Lower lobe of right lung (tissue), 2 donors: ENCODE measurements at regions of chr1 and their contacts with region 1.

Region 1: GRCh38 chr1:109404838-109405237 is 7.1 kb upstream of the SORT1 start:
- DNase-seq: no peak
- ATAC-seq: no peak
- H3K4me3 ChIP-seq: no peak overlapping the region
- H3K27ac ChIP-seq: no peak overlapping the region
- H3K4me1 ChIP-seq: no peaks in the 10 kb centered on the region
- H3K27me3 ChIP-seq: no peaks in the 10 kb centered on the region
- CTCF ChIP-seq: no peak

Region 2: DNA sequence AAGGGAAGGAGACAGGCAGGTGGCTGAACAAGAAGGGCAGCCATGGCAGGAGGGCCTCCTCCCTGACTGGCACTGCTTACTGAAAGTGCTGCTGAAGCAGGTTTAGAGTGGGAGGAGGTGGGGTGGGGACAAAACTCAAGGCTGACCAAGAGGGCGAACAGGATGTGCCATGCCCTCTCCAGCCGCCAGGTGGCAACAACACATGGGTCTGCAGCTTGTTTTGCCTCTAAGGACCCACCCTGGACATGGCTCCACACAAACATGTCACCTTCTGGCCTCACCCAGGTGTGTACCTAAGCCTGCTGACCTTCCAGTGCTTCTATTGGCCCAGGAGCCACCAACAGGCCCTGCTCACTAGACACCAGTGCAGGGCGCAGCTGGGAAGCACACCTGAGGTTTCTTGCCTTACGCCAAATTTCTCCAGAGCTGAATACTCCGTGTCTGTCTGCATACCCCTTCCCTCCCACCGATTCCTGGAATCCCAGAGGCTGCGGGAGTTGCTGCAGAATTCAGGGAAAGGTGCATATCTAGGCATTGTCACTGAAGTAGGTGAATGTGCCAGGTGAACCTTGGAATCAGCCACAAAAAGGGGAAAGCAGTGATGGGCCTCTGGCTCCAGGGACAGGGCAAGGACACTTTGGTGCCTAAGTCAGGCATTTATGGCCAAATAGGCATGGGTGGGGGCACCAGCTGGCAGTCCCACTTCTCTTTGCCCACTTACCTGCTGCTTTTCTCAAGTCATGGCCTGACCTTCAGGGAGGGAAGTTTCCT is 127.2 kb before region 1 on chr1:
- intact Hi-C with region 1: loop called (anchors 10 kb)
- DNase-seq: peak; percentile 91
- ATAC-seq: peak; percentile 79 to 87
- H3K4me3 ChIP-seq: no peak overlapping the region
- H3K27ac ChIP-seq: peak overlapping the region; percentile 73
- H3K4me1 ChIP-seq: peaks cover 45% of the 10 kb centered on the region
- H3K27me3 ChIP-seq: no peaks in the 10 kb centered on the region
- CTCF ChIP-seq: peak; percentile 90

Region 3: GRCh38 chr1:110347182-110347893 is 942.5 kb after region 1 on chr1:
- intact Hi-C with region 1: no loop called
- DNase-seq: no peak
- ATAC-seq: no peak
- H3K4me3 ChIP-seq: no peak overlapping the region
- H3K27ac ChIP-seq: no peak overlapping the region
- H3K4me1 ChIP-seq: peaks cover 88% of the 10 kb centered on the region
- H3K27me3 ChIP-seq: no peaks in the 10 kb centered on the region
- CTCF ChIP-seq: no peak